Gastrocnemius medialis (tissue), 4 donors: ENCODE measurements at regions of chr6 and their contacts with region 1.

Region 1: GRCh38 chr6:131627724-131628682 is at the start of gene MED23:
- DNase-seq: peak; percentile 88 to 90
- ATAC-seq: peak; percentile 96 to 99
- H3K4me3 ChIP-seq: peak within 1 kb of the TSS; percentile 79 to 91 (median 84)
- H3K27ac ChIP-seq: peak within 1 kb of the TSS; percentile 74 to 87 (median 80)
- H3K4me1 ChIP-seq: peaks cover 16 to 21% of the 10 kb centered on the region in 2 donors
- H3K27me3 ChIP-seq: no peaks in the 10 kb centered on the region
- CTCF ChIP-seq: peak; percentile 77 to 97 (median 86)
- POLR2A ChIP-seq: peak; percentile 21 to 27
- total RNA-seq, gene MED23: 7.5 to 16.0 (median 12.5) TPM

Region 2: DNA sequence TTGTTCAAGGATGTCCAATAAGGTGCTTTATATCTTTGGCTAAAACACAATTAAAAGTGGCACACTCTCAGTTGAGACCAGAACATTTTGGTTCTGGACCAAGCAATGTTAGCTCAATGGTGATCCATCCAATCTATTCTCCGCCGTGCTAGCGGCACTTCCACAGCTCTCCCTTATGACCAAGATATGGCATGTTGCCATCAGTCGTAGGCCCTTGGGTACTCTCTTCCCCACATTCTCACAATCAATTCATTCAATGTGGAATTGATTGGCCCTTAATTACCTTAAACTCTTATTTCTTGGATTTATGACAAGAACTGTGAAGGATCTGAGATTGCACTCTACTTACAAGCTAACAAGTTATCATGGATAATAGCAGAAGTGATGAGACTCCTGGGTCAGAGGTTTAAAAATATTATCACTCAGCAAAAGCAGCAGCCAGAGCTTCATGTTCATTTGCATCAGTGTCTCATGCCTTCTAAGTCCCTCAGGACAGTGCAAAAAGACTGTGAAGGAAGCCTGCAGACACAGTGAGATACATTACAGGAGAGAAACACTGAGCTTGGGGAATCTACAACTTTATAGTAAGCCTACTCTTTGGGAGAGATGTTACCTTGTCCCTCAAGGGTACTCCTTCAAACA is 134.9 kb before region 1 on chr6:
- in situ Hi-C with region 1: no loop called
- intact Hi-C with region 1: no loop called
- DNase-seq: no peak
- ATAC-seq: no peak
- H3K4me3 ChIP-seq: no peak overlapping the region
- H3K27ac ChIP-seq: no peak overlapping the region
- H3K4me1 ChIP-seq: no peaks in the 10 kb centered on the region
- H3K27me3 ChIP-seq: no peaks in the 10 kb centered on the region
- CTCF ChIP-seq: no peak
- POLR2A ChIP-seq: no peak

Region 3: GRCh38 chr6:131696925-131697324 is 68.9 kb after region 1 on chr6:
- in situ Hi-C with region 1: no loop called
- intact Hi-C with region 1: no loop called
- DNase-seq: no peak
- ATAC-seq: no peak
- H3K4me3 ChIP-seq: no peak overlapping the region
- H3K27ac ChIP-seq: no peak overlapping the region
- H3K4me1 ChIP-seq: no peaks in the 10 kb centered on the region
- H3K27me3 ChIP-seq: no peaks in the 10 kb centered on the region
- CTCF ChIP-seq: no peak
- POLR2A ChIP-seq: no peak

Region 4: GRCh38 chr6:131807644-131808459 is 179.8 kb after region 1 on chr6 and contains the start of gene ENPP1:
- in situ Hi-C with region 1: no loop called
- intact Hi-C with region 1: loop called (anchors 2 kb)
- DNase-seq: peak; percentile 48 to 71
- ATAC-seq: peak; percentile 91 to 95
- H3K4me3 ChIP-seq: peak within 1 kb of the TSS; percentile 61 to 76 (median 70)
- H3K27ac ChIP-seq: peak within 1 kb of the TSS; percentile 71 to 84 (median 78)
- H3K4me1 ChIP-seq: peaks cover 0 to 7% of the 10 kb centered on the region in 2 donors
- H3K27me3 ChIP-seq: no peaks in the 10 kb centered on the region
- CTCF ChIP-seq: peak in 3 of 5 experiments; percentile 22 to 46 (median 43)
- POLR2A ChIP-seq: peak in 1 of 2 donors; percentile 45
- total RNA-seq, gene ENPP1: 3.1 to 5.0 (median 4.0) TPM

Region 5: DNA sequence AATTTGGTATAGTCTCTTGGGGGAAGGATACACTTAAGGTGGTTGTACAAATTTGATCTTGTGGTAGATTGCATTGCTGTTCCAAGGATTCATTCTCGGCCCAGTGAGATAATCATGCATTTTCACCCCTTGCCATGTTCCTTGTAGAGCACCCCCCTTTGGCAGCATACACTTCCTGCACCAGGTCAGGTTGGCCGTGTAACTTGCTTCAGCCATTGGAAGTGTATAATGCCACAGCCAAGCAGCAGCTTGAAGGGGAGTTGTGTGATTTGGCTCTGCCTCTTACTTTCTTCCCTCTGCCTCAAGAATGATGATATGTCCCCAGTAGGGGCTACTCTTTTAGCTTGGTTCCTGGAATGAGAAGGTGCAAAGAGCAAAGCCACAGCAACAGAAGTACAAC is 301.3 kb after region 1 on chr6:
- in situ Hi-C with region 1: no loop called
- intact Hi-C with region 1: no loop called
- DNase-seq: no peak
- ATAC-seq: no peak
- H3K4me3 ChIP-seq: no peak overlapping the region
- H3K27ac ChIP-seq: no peak overlapping the region
- H3K4me1 ChIP-seq: no peaks in the 10 kb centered on the region
- H3K27me3 ChIP-seq: no peaks in the 10 kb centered on the region
- CTCF ChIP-seq: no peak
- POLR2A ChIP-seq: no peak